Motor neuron (in vitro differentiated cells): ENCODE measurements at regions of chr19 and their contacts with region 1.

Region 1: GRCh38 chr19:925526-926322 is at the start of gene ARID3A:
- ATAC-seq: peak; percentile 58 to 74 (median 69)
- H3K4me3 ChIP-seq: peak within 1 kb of the TSS; percentile 89 to 98 (median 91)
- H3K27ac ChIP-seq: peak within 1 kb of the TSS; percentile 90 to 97
- H3K4me1 ChIP-seq: peaks cover 5 to 6% of the 10 kb centered on the region in 2 donors
- total RNA-seq, gene ARID3A: 5.8 to 22.6 (median 10.3) TPM

Region 2: DNA sequence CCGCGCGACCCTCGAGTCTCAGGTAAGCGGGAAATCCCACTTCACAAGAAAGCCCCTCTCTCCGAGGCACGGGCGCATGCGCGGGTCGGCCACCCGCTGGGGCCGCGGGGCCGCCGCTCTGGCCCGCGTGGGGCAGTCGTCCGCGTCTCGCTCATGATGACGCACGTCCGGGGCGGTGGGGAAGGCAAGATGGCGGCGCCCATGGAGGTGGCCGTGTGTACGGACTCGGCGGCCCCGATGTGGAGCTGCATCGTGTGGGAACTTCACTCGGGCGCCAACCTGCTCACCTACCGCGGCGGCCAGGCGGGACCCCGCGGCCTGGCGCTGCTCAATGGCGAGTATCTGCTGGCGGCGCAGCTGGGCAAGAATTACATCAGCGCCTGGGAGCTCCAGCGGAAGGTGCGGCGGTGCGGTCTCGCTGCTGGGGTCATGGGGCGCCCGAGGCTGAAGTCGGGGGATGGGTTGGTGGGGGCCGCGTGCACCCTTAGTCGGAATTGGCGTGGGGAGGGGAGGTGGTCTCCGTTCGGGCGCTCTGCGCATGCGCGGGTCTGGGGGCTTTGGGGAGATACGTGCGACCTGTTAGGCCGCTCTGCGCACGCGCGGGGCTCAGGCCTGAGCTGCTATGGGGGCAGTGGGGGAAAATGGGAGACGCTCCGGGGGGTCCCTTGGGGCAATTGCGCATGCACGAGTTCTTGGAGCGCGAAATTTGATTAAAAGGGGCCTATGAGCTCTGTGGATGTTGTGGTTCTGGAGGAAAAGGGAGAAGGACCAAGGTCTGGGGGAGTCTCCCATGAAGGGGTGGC is 58.6 kb after region 1 on chr19 and contains the start of gene WDR18:
- in situ Hi-C with region 1: loop called in 6 of 9 experiments (anchors 5 to 10 kb)
- ATAC-seq: peak; percentile 76 to 89 (median 82)
- H3K4me3 ChIP-seq: peak within 1 kb of the TSS; percentile 94 to 99 (median 97)
- H3K27ac ChIP-seq: peak within 1 kb of the TSS; percentile 98 to 99
- H3K4me1 ChIP-seq: peaks cover 15 to 21% of the 10 kb centered on the region in 2 donors
- total RNA-seq, gene WDR18: 23.8 to 64.7 (median 36.2) TPM

Region 3: GRCh38 chr19:1401138-1401888 is 475.6 kb after region 1 on chr19 and contains the start of gene GAMT:
- in situ Hi-C with region 1: no loop called
- ATAC-seq: peak; percentile 12 to 78 (median 67)
- H3K4me3 ChIP-seq: peak within 1 kb of the TSS; percentile 41 to 56 (median 51)
- H3K27ac ChIP-seq: peak within 1 kb of the TSS in 1 of 2 donors; percentile 12
- H3K4me1 ChIP-seq: peaks cover 5 to 12% of the 10 kb centered on the region in 2 donors
- total RNA-seq, gene GAMT: 18.6 to 38.9 (median 27.6) TPM